ENCODE measurements at regions of chr12 and their contacts with region 1.

Region 1: GRCh38 chr12:53321074-53321814 is at the start of gene AAAS:
- DNase-seq: peak; percentile 95 to 97 (median 96)
- H3K4me3 ChIP-seq: peak within 1 kb of the TSS; percentile 87 to 94
- H3K4me3 Mint-ChIP-seq: peak within 1 kb of the TSS; percentile 94 to 100 (median 97)
- H3K27ac ChIP-seq: peak within 1 kb of the TSS; percentile 74
- H3K27ac Mint-ChIP-seq: peak within 1 kb of the TSS; percentile 90 to 100 (median 97)
- H3K4me1 ChIP-seq: peaks cover 44% of the 10 kb centered on the region
- H3K4me1 Mint-ChIP-seq: peaks cover 24 to 52% (median 38%) of the 10 kb centered on the region in 4 donors
- H3K27me3 ChIP-seq: no peaks in the 10 kb centered on the region
- H3K27me3 Mint-ChIP-seq: peaks cover 0 to 2% of the 10 kb centered on the region in 2 donors
- total RNA-seq, gene AAAS: 63.6 to 66.5 TPM

Region 2: DNA sequence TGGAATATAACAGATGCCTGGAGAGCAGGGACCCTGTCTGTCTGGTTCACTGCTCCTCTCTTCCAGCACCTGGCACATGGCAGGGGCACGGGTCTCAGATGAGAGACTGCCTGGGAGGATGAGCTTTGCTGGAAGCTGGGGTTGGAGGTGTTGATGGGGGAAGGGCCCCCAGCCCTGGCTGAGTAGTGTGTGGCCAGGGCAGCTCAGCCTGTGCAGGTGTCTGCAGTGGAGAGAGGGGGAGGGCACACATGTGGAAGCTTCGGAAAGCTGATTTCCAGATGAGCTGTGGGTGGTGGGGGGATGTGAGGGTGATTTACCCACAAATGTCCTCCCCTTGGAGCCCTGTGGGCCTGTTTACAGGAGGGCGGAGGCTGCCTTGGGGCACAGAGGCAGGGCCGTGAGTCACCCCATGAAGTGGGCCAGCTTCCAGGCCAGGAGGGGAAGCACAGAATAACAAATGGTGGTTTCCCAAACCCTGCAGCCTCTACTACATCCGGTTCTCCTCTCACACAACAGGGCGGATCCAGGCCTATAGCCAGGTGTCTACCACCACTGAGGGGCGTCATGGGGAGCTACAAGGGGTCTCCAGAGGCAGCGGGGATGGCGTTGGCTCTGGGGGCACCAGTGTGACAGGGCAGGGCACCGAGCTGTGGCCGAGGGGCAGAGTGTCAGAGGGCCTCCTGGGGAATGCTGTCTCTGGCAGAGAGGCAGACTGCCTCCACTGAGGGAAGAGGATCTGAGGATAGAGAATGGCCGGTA is 1077.2 kb before region 1 on chr12:
- CTCF ChIA-PET with region 1: no interaction called
- POLR2A ChIA-PET with region 1: no interaction called
- intact Hi-C with region 1: no loop called
- DNase-seq: peak; percentile 22 to 86 (median 52)
- H3K4me3 ChIP-seq: no peak overlapping the region
- H3K4me3 Mint-ChIP-seq: peak overlapping the region in 6 of 8 donors; percentile 6 to 79 (median 34)
- H3K27ac ChIP-seq: peak overlapping the region; percentile 43
- H3K27ac Mint-ChIP-seq: peak overlapping the region; percentile 80 to 93 (median 88)
- H3K4me1 ChIP-seq: peaks cover 19% of the 10 kb centered on the region
- H3K4me1 Mint-ChIP-seq: peaks cover 9 to 41% (median 13%) of the 10 kb centered on the region in 4 donors
- H3K27me3 ChIP-seq: no peaks in the 10 kb centered on the region
- H3K27me3 Mint-ChIP-seq: peaks cover 0 to 7% of the 10 kb centered on the region in 2 donors

Region 3: DNA sequence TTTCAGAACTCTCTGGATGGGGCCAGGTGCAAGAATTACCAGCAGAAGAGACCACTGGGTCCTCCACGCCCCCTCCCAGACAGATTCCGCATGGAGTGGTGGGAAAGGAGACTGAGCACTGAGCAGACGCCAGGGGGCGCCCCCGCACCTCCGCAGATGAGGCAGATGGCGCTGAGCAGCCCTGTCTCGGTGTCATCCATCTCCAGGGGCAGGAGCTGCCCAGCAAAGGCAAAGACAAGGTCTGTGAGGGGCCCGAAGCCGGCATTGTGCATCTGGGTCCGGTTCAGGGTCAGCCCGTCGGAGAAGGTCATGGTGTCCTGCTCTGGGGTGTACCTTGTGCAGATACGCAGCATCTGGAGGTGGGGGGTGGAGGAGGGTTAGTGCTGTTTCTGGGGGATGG is 107.9 kb before region 1 on chr12:
- CTCF ChIA-PET with region 1: interaction called, 97 read pairs
- POLR2A ChIA-PET with region 1: interaction called, 25 read pairs
- intact Hi-C with region 1: loop called (anchors 1 kb)
- DNase-seq: peak; percentile 77 to 84 (median 78)
- H3K4me3 ChIP-seq: no peak overlapping the region
- H3K4me3 Mint-ChIP-seq: peak overlapping the region in 1 of 8 donors; percentile 41
- H3K27ac ChIP-seq: peak overlapping the region; percentile 36
- H3K27ac Mint-ChIP-seq: peak overlapping the region; percentile 46 to 97 (median 87)
- H3K4me1 ChIP-seq: peaks cover 84% of the 10 kb centered on the region
- H3K4me1 Mint-ChIP-seq: peaks cover 45 to 81% (median 68%) of the 10 kb centered on the region in 4 donors
- H3K27me3 ChIP-seq: no peaks in the 10 kb centered on the region
- H3K27me3 Mint-ChIP-seq: no peaks in the 10 kb centered on the region

Region 4: DNA sequence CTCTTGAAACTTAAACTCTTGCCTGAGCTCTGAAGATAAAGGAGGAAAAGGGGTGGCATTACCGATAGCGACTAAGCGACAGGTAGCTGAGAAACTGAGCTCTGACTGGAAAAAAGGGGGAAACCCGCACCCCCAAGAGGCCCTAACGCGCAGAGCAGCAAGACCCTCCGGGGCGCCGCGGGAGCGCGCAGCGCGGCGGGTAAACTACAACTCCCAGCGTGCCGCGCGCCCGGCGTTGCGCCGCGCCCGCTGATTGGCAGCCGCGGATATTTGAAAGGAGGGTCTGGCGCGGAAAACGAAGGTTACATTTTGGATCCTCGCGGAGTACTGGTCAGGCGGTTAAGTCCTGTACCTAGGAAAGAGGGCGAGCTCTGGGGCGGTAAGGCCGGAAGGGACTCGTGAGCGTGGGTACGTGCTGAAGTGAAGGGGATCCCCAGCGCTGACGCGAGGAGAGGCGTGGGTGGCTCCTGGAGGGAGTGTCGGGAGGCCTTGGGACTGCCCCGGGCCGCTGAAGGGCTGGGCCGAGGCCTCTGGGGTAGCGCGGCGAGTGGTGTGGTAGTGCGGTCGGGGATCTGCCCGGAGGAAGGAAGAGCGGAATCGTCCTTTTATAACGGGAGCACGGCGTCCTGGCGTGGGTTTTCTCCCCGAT is 53.1 kb before region 1 on chr12 and contains the start of gene ESPL1:
- CTCF ChIA-PET with region 1: interaction called, 19 read pairs
- POLR2A ChIA-PET with region 1: interaction called, 10 read pairs
- intact Hi-C with region 1: loop called (anchors 2 kb)
- DNase-seq: peak; percentile 78 to 82 (median 81)
- H3K4me3 ChIP-seq: peak within 1 kb of the TSS; percentile 76 to 91
- H3K4me3 Mint-ChIP-seq: peak within 1 kb of the TSS; percentile 93 to 100 (median 96)
- H3K27ac ChIP-seq: peak within 1 kb of the TSS; percentile 71
- H3K27ac Mint-ChIP-seq: peak within 1 kb of the TSS; percentile 92 to 97 (median 95)
- H3K4me1 ChIP-seq: peaks cover 10% of the 10 kb centered on the region
- H3K4me1 Mint-ChIP-seq: peaks cover 11 to 29% (median 19%) of the 10 kb centered on the region in 4 donors
- H3K27me3 ChIP-seq: no peaks in the 10 kb centered on the region
- H3K27me3 Mint-ChIP-seq: no peaks in the 10 kb centered on the region
- total RNA-seq, gene ESPL1: 0.20 to 0.55 TPM

Region 5: DNA sequence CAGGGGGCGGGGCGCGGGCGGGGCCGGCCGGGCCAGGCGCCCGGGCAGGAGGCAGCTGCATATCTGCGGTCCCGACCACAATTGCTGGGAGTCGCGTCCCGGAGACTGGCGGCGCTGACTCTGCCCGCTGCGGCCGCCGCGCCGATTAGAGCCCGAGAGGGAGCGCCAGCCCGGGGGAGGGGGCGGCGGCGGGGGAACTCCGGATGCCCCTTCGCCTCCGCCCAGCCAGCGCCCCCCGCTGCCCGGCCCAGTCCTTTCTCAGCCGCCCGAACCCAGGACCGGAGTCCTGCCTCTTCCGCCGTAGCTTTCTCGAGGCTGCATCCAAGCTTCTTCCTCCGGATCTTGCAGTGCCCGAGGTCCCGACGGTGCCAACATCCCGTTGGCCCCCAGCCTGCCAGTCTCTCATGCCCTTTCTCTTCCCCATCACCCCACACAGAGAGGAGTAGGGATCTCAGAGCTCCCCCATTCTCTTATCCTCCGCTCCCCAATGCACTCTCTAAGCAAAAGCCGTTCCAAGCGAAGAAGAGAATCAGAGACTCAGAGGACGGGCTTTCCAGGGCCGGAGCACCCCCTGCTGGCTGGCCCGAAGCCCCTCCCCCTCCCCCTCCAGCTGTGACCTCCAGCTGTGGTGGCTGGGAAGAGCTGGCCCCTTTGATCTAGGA is 23.7 kb after region 1 on chr12:
- CTCF ChIA-PET with region 1: interaction called, 294 read pairs
- POLR2A ChIA-PET with region 1: interaction called, 111 read pairs
- intact Hi-C with region 1: loop called (anchors 1 kb)
- DNase-seq: peak; percentile 62 to 66 (median 65)
- H3K4me3 ChIP-seq: peak overlapping the region in 1 of 2 donors; percentile 73
- H3K4me3 Mint-ChIP-seq: peak overlapping the region; percentile 94 to 99 (median 98)
- H3K27ac ChIP-seq: peak overlapping the region; percentile 44
- H3K27ac Mint-ChIP-seq: peak overlapping the region; percentile 68 to 97 (median 94)
- H3K4me1 ChIP-seq: peaks cover 7% of the 10 kb centered on the region
- H3K4me1 Mint-ChIP-seq: peaks cover 11 to 18% (median 14%) of the 10 kb centered on the region in 4 donors
- H3K27me3 ChIP-seq: no peaks in the 10 kb centered on the region
- H3K27me3 Mint-ChIP-seq: no peaks in the 10 kb centered on the region

Region 6: DNA sequence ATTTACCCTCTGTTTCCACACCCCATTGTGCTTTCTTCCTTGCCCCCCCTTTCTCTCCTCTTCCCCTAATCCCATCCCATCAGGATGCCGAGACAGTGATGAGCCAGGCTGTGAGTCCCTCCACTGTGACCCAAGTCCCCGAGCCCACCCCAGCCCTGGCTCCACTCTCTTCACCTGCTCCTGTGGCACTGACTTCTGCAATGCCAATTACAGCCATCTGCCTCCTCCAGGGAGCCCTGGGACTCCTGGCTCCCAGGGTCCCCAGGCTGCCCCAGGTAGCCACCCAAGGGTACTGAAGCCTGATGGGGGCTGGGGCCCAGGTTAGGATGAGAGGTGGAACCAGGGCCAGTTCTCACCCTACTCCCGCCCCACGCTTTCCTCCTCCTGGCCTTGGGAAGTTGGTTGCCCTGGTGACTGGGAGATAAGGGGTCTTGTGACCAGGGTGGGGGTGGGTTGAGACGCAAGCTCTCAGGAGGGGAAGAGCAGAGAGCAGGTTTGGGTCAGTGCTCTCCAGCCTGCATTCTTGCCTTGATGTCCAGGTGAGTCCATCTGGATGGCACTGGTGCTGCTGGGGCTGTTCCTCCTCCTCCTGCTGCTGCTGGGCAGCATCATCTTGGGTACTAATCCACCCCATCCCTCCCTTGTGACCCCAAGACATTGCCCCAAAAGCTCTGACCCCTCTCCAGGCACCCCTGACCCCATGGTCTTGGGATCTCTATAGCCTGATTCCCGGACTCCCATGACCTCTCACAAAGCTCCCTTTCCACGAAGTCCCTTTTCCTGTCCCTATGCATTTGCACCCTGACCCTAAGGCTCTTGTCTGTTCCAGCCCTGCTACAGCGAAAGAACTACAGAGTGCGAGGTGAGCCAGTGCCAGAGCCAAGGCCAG is 103.6 kb after region 1 on chr12:
- CTCF ChIA-PET with region 1: interaction called, 27 read pairs
- POLR2A ChIA-PET with region 1: interaction called, 11 read pairs
- intact Hi-C with region 1: loop called (anchors 1 kb)
- DNase-seq: no peak
- H3K4me3 ChIP-seq: no peak overlapping the region
- H3K4me3 Mint-ChIP-seq: no peak overlapping the region
- H3K27ac ChIP-seq: no peak overlapping the region
- H3K27ac Mint-ChIP-seq: no peak overlapping the region
- H3K4me1 ChIP-seq: peaks cover 5% of the 10 kb centered on the region
- H3K4me1 Mint-ChIP-seq: peaks cover 5 to 9% (median 6%) of the 10 kb centered on the region in 4 donors
- H3K27me3 ChIP-seq: no peaks in the 10 kb centered on the region
- H3K27me3 Mint-ChIP-seq: no peaks in the 10 kb centered on the region

Region 7: GRCh38 chr12:53500776-53501614 is 179.8 kb after region 1 on chr12 and contains the start of gene TARBP2:
- CTCF ChIA-PET with region 1: interaction called, 8 read pairs
- POLR2A ChIA-PET with region 1: interaction called, 75 read pairs
- intact Hi-C with region 1: loop called (anchors 1 kb)
- DNase-seq: peak; percentile 98 to 99 (median 99)
- H3K4me3 ChIP-seq: peak within 1 kb of the TSS; percentile 79 to 91
- H3K4me3 Mint-ChIP-seq: peak within 1 kb of the TSS; percentile 89 to 98 (median 92)
- H3K27ac ChIP-seq: peak within 1 kb of the TSS; percentile 98
- H3K27ac Mint-ChIP-seq: peak within 1 kb of the TSS; percentile 92 to 100 (median 99)
- H3K4me1 ChIP-seq: peaks cover 41% of the 10 kb centered on the region
- H3K4me1 Mint-ChIP-seq: peaks cover 17 to 63% (median 45%) of the 10 kb centered on the region in 4 donors
- H3K27me3 ChIP-seq: no peaks in the 10 kb centered on the region
- H3K27me3 Mint-ChIP-seq: no peaks in the 10 kb centered on the region
- total RNA-seq, gene TARBP2: 26.9 to 37.0 TPM

Measured in CD4-positive, alpha-beta memory T cell (primary cell).